GM10248 (cell line): ENCODE measurements at regions of chr2 and their contacts with region 1.

Region 1: GRCh38 chr2:55014962-55015939 is 35.0 kb downstream of the RTN4 start:
- DNase-seq: no peak
- CTCF ChIP-seq: peak; percentile 66

Region 2: DNA sequence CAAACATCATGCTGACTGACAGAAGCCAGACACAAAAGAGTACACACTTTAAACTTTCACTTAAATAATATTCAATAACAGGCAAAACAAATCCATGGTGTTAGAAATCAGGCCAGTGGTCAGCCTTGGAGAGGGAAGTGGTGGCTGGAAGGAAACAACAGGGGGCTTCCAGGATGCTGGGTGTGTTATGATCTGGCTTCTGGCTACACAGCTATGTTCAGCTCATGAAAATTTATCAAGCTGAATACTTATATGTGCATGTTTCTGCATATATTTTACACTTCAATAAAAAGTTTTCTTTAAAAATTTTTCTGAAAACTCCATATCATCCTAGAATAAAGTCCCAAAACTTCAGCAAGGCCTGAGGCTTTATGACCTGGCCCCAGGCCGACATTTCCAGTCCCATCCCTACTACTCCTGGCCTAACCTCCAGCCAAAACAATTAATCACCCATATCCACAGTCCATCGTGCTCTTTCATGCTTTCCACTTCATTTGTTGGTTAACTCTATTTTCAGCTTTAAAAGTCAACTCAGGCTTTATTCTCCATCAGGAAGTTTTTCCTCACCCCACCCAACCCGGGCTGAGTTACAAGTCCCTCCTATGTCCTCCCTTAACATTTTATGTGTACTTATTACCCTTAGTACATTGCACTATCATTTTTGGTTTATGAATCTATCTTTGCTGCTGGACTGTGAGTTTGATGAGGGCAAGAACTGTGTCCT is 587.0 kb before region 1 on chr2:
- CTCF ChIA-PET with region 1: no interaction called
- POLR2A ChIA-PET with region 1: no interaction called
- DNase-seq: no peak
- CTCF ChIP-seq: no peak

Region 3: GRCh38 chr2:54999182-54999581 is 16.1 kb before region 1 on chr2:
- CTCF ChIA-PET with region 1: interaction called, 14 read pairs
- POLR2A ChIA-PET with region 1: no interaction called
- DNase-seq: no peak
- CTCF ChIP-seq: no peak

Region 4: GRCh38 chr2:55026202-55026601 is 11.0 kb after region 1 on chr2:
- CTCF ChIA-PET with region 1: interaction called, 26 read pairs
- POLR2A ChIA-PET with region 1: no interaction called
- DNase-seq: no peak
- CTCF ChIP-seq: no peak

Region 5: DNA sequence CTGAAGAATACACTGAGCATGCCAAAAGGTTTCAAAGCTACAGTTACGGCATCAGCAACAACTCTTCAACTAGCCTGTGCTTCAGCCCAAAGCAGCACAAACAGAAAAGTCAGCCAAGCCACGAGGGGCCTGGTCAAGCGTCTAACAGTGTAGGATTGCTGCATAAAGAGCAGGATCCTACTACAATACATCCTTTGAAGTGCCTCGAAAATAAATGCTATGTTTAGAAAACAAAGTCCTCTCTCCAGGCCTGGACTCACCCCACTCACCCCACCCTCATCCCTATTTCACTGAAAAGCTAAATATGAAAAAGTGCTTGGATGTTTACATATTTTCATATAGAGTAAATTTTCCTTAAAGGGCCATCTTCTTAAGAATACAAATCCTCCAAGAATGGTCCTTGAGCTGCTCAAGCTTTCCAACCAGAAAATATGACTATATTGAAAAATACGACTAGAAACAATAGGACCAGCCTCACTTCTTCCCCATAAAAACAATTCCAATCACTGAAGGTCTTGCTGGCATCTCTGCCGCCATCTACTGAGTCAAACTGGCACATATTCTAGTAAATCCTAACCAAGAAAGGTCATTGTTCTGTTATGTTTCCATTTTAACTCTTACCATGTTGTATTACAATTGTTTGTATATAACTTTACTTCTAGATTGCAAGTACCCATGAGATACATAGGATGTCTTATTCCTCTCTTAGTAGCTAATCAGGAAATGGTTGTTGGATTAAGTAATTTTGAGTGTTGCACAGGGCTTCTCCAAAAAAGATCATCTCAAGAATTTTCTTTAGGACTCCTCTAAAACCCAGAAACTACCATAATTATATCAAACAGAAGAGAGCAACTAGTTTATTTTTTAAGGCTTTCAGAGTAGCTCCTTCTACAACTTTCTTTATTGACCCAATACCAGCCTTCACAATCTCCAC is 153.2 kb after region 1 on chr2:
- CTCF ChIA-PET with region 1: interaction called, 30 read pairs
- POLR2A ChIA-PET with region 1: no interaction called
- DNase-seq: peak; percentile 42
- CTCF ChIP-seq: peak; percentile 49

Region 6: DNA sequence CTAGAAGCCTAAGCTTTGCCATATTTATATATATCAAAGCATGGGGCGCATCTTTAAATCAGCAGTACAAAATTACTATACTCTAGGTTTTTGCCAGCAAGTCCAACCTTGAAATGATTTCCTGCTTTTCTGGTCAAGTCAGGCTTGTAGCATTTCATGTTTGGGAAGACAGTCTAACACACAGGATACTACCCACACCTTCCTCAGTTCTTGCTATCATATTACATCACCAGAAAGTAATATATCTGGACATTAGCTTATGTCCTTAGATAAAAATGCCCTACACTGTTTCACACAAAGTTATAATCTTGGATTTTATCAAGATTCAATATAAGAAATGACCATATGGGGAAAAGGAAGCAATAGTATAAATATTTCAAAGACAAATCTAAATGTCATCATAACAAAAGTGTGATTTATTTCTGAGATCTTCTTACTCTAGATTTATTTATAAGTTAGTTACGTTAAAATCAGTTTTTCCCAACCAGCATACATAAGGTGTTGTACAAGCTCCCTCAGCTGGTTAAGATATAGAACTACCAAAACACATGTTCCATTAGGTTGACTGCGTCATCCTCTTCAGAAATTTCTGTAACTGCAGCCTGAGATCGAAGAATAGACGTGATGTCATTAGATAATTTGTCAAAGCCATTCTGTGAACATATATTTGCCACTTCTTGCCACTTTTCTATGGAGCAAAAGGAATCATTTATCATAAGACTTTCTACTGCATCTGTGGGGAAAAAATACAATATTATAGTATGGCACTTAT is 160.2 kb after region 1 on chr2:
- CTCF ChIA-PET with region 1: interaction called, 30 read pairs
- POLR2A ChIA-PET with region 1: no interaction called
- DNase-seq: peak; percentile 58
- CTCF ChIP-seq: peak; percentile 52

Region 7: GRCh38 chr2:55277310-55277709 is 262.1 kb after region 1 on chr2:
- CTCF ChIA-PET with region 1: no interaction called
- POLR2A ChIA-PET with region 1: no interaction called
- DNase-seq: no peak
- CTCF ChIP-seq: no peak